ENCODE measurements at regions of chr2 and their contacts with region 1.

Region 1: DNA sequence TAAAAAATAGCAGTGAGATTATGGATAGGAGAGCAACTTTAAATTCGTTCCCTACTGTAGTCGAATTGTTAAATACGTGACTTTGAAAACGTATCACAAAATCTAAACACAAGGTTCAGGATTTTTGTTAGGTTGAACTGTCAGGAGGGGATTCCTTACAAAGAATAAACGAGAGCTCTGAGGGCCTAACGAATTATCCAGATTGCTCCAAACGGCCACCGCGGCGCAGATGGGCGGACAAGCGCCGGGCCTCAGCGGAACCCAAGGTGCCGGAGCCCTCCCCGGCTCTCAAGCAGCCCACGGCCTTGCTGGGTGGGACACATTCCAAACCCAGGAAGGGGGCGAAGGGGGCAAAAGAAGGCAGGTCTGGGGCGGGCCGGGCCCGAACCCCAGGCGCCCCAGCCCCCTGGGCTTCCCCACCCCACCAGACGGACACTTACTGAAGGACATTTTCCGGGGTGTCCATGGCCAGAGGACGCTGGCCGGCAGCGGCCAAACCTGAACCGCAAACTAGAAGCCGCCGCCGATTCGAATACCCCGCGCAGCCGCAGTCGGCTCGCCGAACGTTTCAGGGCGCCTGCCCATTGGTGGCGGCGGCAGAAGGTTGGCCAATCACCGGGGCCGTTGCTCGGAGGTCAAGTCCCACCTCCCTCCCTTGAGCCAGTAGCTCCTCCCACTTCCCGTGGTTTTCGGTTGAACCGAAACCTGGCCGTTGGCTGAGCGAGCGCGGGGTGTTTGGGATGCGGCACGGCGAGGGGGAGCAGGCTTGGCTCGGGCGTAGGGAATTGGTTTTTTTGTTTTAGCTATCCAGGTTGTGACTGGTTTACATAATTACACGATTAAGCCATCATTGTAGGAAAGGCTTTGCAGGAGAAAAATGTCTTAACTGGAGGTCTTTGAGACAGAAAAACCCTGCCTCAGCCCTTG is at the start of gene BUB1:
- DNase-seq: peak; percentile 98
- ATAC-seq: peak; percentile 99
- H3K4me3 Mint-ChIP-seq: peak within 1 kb of the TSS; percentile 96
- H3K27ac Mint-ChIP-seq: peak within 1 kb of the TSS; percentile 97
- H3K4me1 Mint-ChIP-seq: peaks cover 30% of the 10 kb centered on the region
- H3K27me3 Mint-ChIP-seq: peaks cover 4% of the 10 kb centered on the region
- total RNA-seq, gene BUB1: 93.5 to 115 TPM

Region 2: DNA sequence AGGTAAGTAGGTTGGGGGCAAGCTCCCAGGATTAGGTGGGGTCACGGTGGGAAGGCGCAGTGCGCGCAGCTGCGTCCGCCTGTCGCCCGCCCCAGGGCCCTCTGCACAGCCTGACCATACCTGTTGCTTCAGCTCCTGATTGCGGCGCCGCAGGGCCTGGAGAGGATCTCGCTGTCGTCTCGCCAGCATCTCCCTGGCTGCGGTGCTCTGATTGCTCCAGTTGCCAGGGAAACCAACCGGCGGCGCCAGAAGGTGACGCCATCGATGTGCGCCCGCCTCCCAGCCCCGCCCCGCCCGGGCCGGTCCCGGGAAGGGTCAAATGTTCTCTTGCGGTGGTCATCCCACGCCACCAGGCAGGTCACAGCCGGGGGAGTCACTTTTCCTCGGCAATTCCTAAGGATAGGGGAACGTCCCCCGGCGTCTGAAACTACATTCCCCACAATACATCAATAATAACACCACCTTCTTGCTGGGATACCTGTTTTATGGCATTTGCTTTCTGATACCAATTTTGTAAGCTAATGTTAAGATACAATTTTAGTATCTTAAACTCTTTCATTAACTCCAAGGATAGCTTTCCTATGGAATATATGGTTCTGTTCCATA is 472.9 kb before region 1 on chr2 and contains the start of gene NPHP1:
- CTCF ChIA-PET with region 1: no interaction called
- POLR2A ChIA-PET with region 1: no interaction called
- intact Hi-C with region 1: loop called in 1 of 2 experiments (anchors 10 kb)
- DNase-seq: peak; percentile 89
- ATAC-seq: peak; percentile 89
- H3K4me3 Mint-ChIP-seq: peak within 1 kb of the TSS; percentile 79
- H3K27ac Mint-ChIP-seq: peak within 1 kb of the TSS; percentile 62
- H3K4me1 Mint-ChIP-seq: peaks cover 26% of the 10 kb centered on the region
- H3K27me3 Mint-ChIP-seq: no peaks in the 10 kb centered on the region
- total RNA-seq, gene NPHP1: 2.2 to 2.8 TPM

Region 3: DNA sequence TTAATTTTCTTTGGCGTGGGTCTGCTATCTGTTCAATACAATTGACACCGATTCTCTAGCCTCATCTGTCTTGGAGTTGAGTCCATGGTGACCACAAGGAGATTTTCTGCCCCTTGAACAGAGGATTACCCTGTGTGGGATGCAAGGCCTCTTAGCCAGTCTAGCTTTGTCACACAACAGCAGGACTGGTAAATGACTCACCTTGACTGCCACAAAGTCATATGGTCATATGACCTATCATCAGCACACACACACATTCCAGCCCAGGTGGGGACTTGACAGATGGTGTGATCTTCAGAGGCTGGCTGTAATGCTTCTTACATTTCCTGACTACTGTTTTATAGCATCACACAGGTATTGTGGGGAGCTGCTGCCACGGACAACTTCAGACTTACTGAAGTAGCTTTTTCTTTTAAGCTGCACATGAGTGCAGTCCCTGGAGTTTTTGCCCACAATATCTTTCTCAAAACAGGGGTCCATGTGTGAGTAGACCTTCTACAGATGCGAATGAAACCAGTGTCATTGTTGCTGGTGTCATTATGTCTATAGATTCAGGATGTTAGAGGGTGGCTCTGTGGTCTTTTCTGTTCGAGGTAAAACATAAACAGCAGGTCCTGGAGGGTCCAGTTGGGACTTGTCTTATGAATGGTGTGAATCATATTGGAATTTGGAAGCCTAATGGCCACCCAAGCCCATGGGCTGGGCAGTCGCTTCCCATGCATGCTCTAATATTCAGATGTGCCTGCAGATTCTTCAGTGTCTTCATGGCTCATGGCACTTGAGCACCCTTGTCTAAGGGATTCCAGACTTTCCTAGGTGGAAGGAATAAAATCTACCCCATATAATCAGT is 35.9 kb after region 1 on chr2:
- CTCF ChIA-PET with region 1: no interaction called
- POLR2A ChIA-PET with region 1: no interaction called
- intact Hi-C with region 1: loop called in 1 of 2 experiments (anchors 5 kb)
- DNase-seq: peak; percentile 36
- ATAC-seq: peak; percentile 99
- H3K4me3 Mint-ChIP-seq: no peak overlapping the region
- H3K27ac Mint-ChIP-seq: no peak overlapping the region
- H3K4me1 Mint-ChIP-seq: no peaks in the 10 kb centered on the region
- H3K27me3 Mint-ChIP-seq: peaks cover 39% of the 10 kb centered on the region

Measured in activated CD4-positive, alpha-beta T cell treated with anti-CD3 and anti-CD28 coated beads for 36 hours (primary cell).